ENCODE measurements at regions of chr1 and their contacts with region 1.

Region 1: DNA sequence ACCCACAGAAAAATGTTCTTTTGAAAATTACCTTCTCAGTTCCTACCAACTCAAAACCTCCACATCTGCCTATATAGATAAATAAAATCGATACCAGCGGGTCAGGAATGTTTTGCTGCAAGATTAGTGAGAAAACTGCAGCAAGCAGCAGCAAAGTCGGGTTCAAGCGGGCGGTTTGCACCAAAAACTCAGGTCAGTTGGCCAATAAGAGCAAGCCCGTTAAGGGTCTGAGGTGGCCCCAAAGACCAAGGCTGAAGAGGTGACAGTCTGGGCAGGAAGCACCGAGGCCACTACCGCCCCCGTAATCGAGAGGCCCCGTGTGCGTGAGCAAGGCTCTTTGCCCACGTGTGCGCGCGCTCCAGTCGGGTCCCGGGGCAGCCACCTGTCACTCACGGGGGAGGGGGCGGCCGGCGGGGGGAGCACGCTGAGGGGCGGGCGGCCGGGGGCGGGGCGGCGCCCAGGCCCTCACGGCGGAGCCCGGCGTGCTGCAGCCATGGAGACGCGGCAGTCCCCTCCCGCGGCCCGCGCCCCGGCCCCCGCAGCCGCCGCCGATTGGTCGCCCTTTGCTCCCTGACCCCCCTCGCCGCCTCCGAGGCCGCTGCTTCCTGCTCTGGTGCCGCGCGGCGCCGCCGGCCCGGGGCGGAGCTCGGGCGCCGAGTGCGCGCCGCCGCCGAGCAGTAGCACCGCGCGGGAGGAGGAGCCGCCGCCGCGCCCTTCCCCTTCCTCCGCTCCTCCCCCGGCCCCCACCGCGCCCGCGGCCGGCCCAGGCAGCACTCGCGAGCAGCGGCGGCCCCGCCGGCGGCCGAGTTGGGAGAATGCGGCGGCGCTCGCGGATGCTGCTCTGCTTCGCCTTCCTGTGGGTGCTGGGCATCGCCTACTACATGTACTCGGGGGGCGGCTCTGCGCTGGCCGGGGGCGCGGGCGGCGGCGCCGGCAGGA is at the start of gene GALNT2:
- DNase-seq: peak; percentile 71 to 96 (median 86)
- ATAC-seq: peak; percentile 90
- H3K4me3 ChIP-seq: peak within 1 kb of the TSS; percentile 74 to 81
- H3K4me3 Mint-ChIP-seq: peak within 1 kb of the TSS; percentile 89
- H3K27ac ChIP-seq: peak within 1 kb of the TSS; percentile 64 to 78
- H3K27ac Mint-ChIP-seq: peak within 1 kb of the TSS; percentile 93
- H3K4me1 ChIP-seq: peaks cover 14% of the 10 kb centered on the region
- H3K4me1 Mint-ChIP-seq: peaks cover 41% of the 10 kb centered on the region
- H3K27me3 ChIP-seq: no peaks in the 10 kb centered on the region
- H3K27me3 Mint-ChIP-seq: no peaks in the 10 kb centered on the region
- CTCF ChIP-seq: no peak
- total RNA-seq, gene GALNT2: 13.6 to 15.4 TPM

Region 2: DNA sequence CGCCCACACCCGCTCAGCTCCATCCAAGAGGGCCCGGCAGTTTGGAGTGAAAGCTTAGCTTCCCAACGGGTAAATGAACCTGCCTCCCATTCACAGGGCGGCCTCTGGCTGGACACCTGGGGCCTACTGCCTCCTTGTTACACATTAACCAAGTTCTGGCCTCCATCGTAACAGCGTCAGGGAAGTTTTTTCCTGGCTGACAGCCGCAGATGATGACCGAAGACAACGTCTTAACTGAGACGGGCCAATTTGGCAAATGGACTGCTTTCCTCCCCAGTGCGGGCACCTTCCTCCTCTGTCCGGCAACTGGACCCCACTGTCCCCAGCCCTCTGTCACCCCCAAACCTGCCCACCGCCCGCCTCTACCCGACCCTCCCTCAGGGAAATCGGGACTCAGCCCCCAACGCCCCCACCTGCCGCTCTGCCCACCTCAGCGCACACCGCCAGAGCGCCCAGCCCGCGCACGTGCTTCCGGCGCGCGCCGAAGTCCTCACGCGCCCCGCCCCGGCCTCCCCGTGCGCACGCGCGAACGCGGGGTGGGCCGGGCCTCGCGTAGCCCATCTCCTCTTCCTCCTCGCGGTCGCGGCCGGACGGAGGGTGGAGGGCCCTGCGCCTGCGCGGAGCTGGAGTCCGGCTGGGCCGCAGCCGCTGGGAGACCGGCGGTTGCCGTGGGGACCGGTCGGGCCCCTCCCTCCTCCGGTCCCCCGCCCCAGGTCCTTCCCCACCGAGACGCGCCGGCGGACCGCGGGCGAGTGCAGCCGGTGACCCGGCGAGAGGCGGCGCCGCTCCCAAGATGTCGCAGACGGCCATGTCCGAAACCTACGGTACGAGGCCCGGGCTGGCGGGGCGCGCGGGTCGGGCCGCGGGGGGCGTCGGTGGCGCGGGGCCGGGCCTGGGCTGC is 795.9 kb before region 1 on chr1 and contains the start of gene RAB4A:
- CTCF ChIA-PET with region 1: no interaction called
- POLR2A ChIA-PET with region 1: no interaction called
- intact Hi-C with region 1: loop called in 1 of 2 experiments (anchors 10 kb)
- DNase-seq: peak; percentile 44 to 90 (median 71)
- ATAC-seq: peak; percentile 86
- H3K4me3 ChIP-seq: peak within 1 kb of the TSS; percentile 70 to 84
- H3K4me3 Mint-ChIP-seq: peak within 1 kb of the TSS; percentile 98
- H3K27ac ChIP-seq: peak within 1 kb of the TSS; percentile 45 to 57
- H3K27ac Mint-ChIP-seq: peak within 1 kb of the TSS; percentile 83
- H3K4me1 ChIP-seq: peaks cover 31% of the 10 kb centered on the region
- H3K4me1 Mint-ChIP-seq: peaks cover 37% of the 10 kb centered on the region
- H3K27me3 ChIP-seq: no peaks in the 10 kb centered on the region
- H3K27me3 Mint-ChIP-seq: no peaks in the 10 kb centered on the region
- CTCF ChIP-seq: no peak
- total RNA-seq, gene RAB4A: 26.7 to 29.7 TPM

Region 3: GRCh38 chr1:229507951-229508822 is 558.5 kb before region 1 on chr1 and contains the start of gene NUP133:
- CTCF ChIA-PET with region 1: no interaction called
- POLR2A ChIA-PET with region 1: no interaction called
- intact Hi-C with region 1: loop called in 1 of 2 experiments (anchors 2 kb)
- DNase-seq: peak; percentile 96 to 100 (median 99)
- ATAC-seq: peak; percentile 94
- H3K4me3 ChIP-seq: peak within 1 kb of the TSS; percentile 94 to 99
- H3K4me3 Mint-ChIP-seq: peak within 1 kb of the TSS; percentile 87
- H3K27ac ChIP-seq: peak within 1 kb of the TSS; percentile 93 to 97
- H3K27ac Mint-ChIP-seq: peak within 1 kb of the TSS; percentile 99
- H3K4me1 ChIP-seq: peaks cover 20% of the 10 kb centered on the region
- H3K4me1 Mint-ChIP-seq: peaks cover 29% of the 10 kb centered on the region
- H3K27me3 ChIP-seq: no peaks in the 10 kb centered on the region
- H3K27me3 Mint-ChIP-seq: no peaks in the 10 kb centered on the region
- CTCF ChIP-seq: no peak
- total RNA-seq, gene NUP133: 49.0 to 50.7 TPM

Region 4: DNA sequence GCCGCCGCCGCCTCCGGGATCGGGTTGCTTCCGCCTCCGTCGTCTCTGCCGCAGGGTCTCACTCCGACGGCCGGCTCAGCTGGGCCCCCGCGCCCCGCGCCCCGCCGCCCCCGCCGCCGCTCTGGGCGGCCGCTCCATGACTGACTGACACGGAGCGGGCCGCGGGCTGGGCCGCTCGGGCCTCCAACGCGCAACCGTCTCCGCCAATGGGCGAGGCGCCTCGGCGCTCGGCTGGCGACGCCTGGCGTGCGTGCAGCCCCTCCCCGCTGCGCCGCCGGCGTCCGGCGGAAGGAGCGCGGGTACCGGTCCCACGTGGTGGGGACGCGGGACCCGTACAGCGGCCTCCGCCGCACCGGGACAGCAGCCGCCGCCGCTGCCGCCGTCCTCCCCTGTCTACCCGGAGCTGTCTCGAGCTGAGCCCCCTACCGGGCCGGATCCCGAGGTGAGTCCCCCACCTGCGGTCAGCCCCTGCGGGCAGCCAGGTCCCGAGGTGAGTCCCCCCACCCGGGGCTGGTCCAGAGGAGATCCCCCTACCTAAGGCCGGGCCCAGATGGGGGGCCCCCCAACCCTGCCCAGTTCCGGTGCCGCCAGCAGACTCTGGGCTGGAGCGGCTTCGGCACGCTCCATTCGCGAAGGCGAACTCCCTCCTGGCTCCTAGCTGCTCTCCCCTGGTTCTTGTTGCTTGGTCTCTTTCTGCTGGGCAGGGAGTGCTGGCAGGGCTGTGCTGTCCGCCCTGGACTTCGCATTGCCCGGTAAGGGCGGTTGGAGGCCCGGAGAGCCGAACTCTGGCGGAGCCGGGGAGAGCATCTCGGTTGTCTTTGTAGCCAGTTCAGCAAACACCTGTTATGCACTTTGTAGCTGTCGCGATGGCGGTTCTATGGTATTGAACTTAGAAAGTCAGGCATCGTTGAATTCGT is 440.6 kb before region 1 on chr1 and contains the starts of genes TAF5L and URB2:
- CTCF ChIA-PET with region 1: no interaction called
- POLR2A ChIA-PET with region 1: no interaction called
- intact Hi-C with region 1: loop called (anchors 2 kb)
- DNase-seq: peak; percentile 60 to 94 (median 81)
- ATAC-seq: peak; percentile 90
- H3K4me3 ChIP-seq: peak within 1 kb of the TSS; percentile 92 to 95
- H3K4me3 Mint-ChIP-seq: peak within 1 kb of the TSS; percentile 99
- H3K27ac ChIP-seq: peak within 1 kb of the TSS; percentile 70 to 78
- H3K27ac Mint-ChIP-seq: peak within 1 kb of the TSS; percentile 95
- H3K4me1 ChIP-seq: peaks cover 29% of the 10 kb centered on the region
- H3K4me1 Mint-ChIP-seq: peaks cover 54% of the 10 kb centered on the region
- H3K27me3 ChIP-seq: no peaks in the 10 kb centered on the region
- H3K27me3 Mint-ChIP-seq: no peaks in the 10 kb centered on the region
- CTCF ChIP-seq: no peak
- total RNA-seq, gene TAF5L: 25.4 to 28.0 TPM
- total RNA-seq, gene URB2: 8.5 to 8.6 TPM

Region 5: GRCh38 chr1:230090194-230090711 is 23.5 kb after region 1 on chr1:
- CTCF ChIA-PET with region 1: no interaction called
- POLR2A ChIA-PET with region 1: no interaction called
- intact Hi-C with region 1: no loop called
- DNase-seq: no peak
- ATAC-seq: no peak
- H3K4me3 ChIP-seq: no peak overlapping the region
- H3K4me3 Mint-ChIP-seq: no peak overlapping the region
- H3K27ac ChIP-seq: no peak overlapping the region
- H3K27ac Mint-ChIP-seq: no peak overlapping the region
- H3K4me1 ChIP-seq: no peaks in the 10 kb centered on the region
- H3K4me1 Mint-ChIP-seq: peaks cover 44% of the 10 kb centered on the region
- H3K27me3 ChIP-seq: no peaks in the 10 kb centered on the region
- H3K27me3 Mint-ChIP-seq: no peaks in the 10 kb centered on the region
- CTCF ChIP-seq: no peak

Region 6: GRCh38 chr1:230123280-230124185 is 56.8 kb after region 1 on chr1:
- CTCF ChIA-PET with region 1: no interaction called
- POLR2A ChIA-PET with region 1: no interaction called
- intact Hi-C with region 1: loop called in 1 of 2 experiments (anchors 2 kb)
- DNase-seq: peak in 2 of 9 experiments; percentile 28 to 49
- ATAC-seq: peak; percentile 51
- H3K4me3 ChIP-seq: no peak overlapping the region
- H3K4me3 Mint-ChIP-seq: peak overlapping the region; percentile 19
- H3K27ac ChIP-seq: peak overlapping the region in 1 of 2 experiments; percentile 51
- H3K27ac Mint-ChIP-seq: peak overlapping the region; percentile 60
- H3K4me1 ChIP-seq: peaks cover 38% of the 10 kb centered on the region
- H3K4me1 Mint-ChIP-seq: peaks cover 72% of the 10 kb centered on the region
- H3K27me3 ChIP-seq: no peaks in the 10 kb centered on the region
- H3K27me3 Mint-ChIP-seq: no peaks in the 10 kb centered on the region
- CTCF ChIP-seq: no peak

Region 7: DNA sequence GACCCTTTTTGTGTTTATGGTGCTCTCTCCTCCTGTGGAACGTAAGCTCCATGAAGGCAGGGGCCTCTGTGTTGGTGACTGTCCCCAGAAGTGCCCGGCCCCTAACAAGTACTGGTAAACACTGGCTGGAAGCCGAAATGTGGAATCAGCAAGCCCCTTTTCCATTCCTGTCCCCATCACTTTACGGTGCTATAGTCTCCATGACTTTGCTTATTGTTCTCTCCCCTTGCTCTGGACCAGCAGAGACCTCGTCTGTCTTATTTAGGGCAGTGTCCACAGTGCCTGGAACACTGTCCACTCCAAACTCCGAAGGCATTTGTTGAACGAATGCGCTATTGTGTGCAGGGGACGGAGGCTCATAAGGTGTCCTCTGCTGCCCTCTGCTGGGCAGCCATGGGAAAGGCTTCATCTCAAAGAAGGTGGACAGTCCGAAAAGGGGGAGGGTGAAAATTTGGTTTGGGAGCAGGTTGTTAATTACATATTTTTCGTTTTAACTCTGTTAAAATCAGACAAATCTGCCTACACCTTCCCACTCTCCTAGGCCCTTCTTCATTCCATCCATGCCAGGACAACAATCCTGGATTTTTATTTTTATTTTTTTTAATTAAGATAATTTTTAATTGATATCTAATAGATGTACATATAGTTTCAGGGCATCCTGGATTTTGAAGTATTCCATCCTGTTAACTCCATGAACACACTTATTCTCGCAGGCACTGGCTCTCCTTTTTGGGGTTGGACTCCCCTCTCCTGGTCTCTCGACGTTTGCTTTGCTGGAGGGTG is 243.8 kb after region 1 on chr1:
- CTCF ChIA-PET with region 1: no interaction called
- POLR2A ChIA-PET with region 1: no interaction called
- intact Hi-C with region 1: no loop called
- DNase-seq: peak; percentile 22 to 83 (median 63)
- ATAC-seq: no peak
- H3K4me3 ChIP-seq: no peak overlapping the region
- H3K4me3 Mint-ChIP-seq: no peak overlapping the region
- H3K27ac ChIP-seq: no peak overlapping the region
- H3K27ac Mint-ChIP-seq: no peak overlapping the region
- H3K4me1 ChIP-seq: no peaks in the 10 kb centered on the region
- H3K4me1 Mint-ChIP-seq: peaks cover 5% of the 10 kb centered on the region
- H3K27me3 ChIP-seq: no peaks in the 10 kb centered on the region
- H3K27me3 Mint-ChIP-seq: peaks cover 2% of the 10 kb centered on the region
- CTCF ChIP-seq: peak; percentile 98

Region 8: GRCh38 chr1:231240883-231241735 is 1174.4 kb after region 1 on chr1 and contains the start of gene GNPAT:
- CTCF ChIA-PET with region 1: no interaction called
- POLR2A ChIA-PET with region 1: no interaction called
- intact Hi-C with region 1: loop called in 1 of 2 experiments (anchors 10 kb)
- DNase-seq: peak; percentile 84 to 96 (median 91)
- ATAC-seq: peak; percentile 96
- H3K4me3 ChIP-seq: peak within 1 kb of the TSS; percentile 77
- H3K4me3 Mint-ChIP-seq: peak within 1 kb of the TSS; percentile 88
- H3K27ac ChIP-seq: peak within 1 kb of the TSS; percentile 79 to 80
- H3K27ac Mint-ChIP-seq: peak within 1 kb of the TSS; percentile 91
- H3K4me1 ChIP-seq: peaks cover 35% of the 10 kb centered on the region
- H3K4me1 Mint-ChIP-seq: peaks cover 78% of the 10 kb centered on the region
- H3K27me3 ChIP-seq: no peaks in the 10 kb centered on the region
- H3K27me3 Mint-ChIP-seq: no peaks in the 10 kb centered on the region
- CTCF ChIP-seq: no peak
- total RNA-seq, gene GNPAT: 10.4 to 11.0 TPM

Region 9: GRCh38 chr1:231528172-231529029 is 1461.7 kb after region 1 on chr1 and contains the start of gene TSNAX:
- CTCF ChIA-PET with region 1: no interaction called
- POLR2A ChIA-PET with region 1: no interaction called
- intact Hi-C with region 1: loop called in 1 of 2 experiments (anchors 5 kb)
- DNase-seq: peak; percentile 83 to 97 (median 89)
- ATAC-seq: peak; percentile 91
- H3K4me3 ChIP-seq: peak within 1 kb of the TSS; percentile 81 to 94
- H3K4me3 Mint-ChIP-seq: peak within 1 kb of the TSS; percentile 97
- H3K27ac ChIP-seq: peak within 1 kb of the TSS; percentile 93 to 98
- H3K27ac Mint-ChIP-seq: peak within 1 kb of the TSS; percentile 100
- H3K4me1 ChIP-seq: peaks cover 44% of the 10 kb centered on the region
- H3K4me1 Mint-ChIP-seq: peaks cover 46% of the 10 kb centered on the region
- H3K27me3 ChIP-seq: no peaks in the 10 kb centered on the region
- H3K27me3 Mint-ChIP-seq: no peaks in the 10 kb centered on the region
- CTCF ChIP-seq: no peak
- total RNA-seq, gene TSNAX: 19.7 to 21.7 TPM